B cell (primary cell): ENCODE measurements at regions of chr13 and their contacts with region 1.

Region 1: DNA sequence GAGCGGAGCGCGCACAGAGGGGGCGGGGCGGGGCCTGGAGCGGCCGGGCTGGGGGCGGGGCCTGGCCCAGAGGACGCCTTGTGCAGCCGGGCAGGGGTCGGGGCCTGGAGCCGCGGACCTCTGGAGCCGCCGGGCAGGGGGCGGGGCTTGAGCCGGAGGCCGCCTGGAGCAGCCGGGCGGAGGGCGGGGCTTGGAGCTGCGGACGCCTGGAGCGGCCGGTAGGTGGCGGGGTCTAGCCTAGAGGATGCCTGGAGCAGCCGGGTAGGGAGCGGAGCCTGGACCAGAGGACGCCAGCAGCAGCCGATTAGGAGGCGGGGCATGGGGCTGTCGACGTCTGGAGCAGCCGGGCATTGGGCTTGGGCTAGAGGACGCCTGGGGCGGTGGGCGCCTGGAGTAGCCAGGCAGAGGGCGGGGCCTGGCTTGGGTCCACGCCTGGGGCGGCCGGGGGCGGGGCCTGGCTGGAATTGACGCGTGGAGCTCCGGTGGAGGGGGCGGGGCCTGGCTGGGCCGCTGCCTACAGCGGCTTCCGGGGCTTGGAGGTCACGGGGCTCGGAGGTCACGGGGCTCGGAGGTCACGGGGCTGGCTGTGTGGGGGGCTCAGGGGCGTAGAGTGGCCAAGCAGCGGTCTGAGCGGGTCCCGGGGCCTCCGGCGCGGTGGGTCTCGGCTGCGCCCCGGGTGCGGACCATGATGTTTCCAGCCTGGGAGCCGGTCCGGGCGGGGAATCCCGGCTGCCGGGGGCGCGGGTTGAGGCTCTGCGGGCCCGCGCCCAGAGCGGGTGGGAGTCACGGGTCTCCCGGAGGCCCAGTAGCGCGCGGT is at the start of gene ANKRD10:
- DNase-seq: peak; percentile 98
- ATAC-seq: peak; percentile 81
- H3K4me3 ChIP-seq: peak within 1 kb of the TSS; percentile 74 to 96 (median 95)
- H3K4me3 Mint-ChIP-seq: peak within 1 kb of the TSS; percentile 84
- H3K27ac ChIP-seq: peak within 1 kb of the TSS; percentile 88 to 97
- H3K27ac Mint-ChIP-seq: peak within 1 kb of the TSS; percentile 98
- H3K4me1 ChIP-seq: peaks cover 28 to 38% of the 10 kb centered on the region in 2 donors
- H3K4me1 Mint-ChIP-seq: peaks cover 44% of the 10 kb centered on the region
- H3K27me3 ChIP-seq: no peaks in the 10 kb centered on the region
- H3K27me3 Mint-ChIP-seq: no peaks in the 10 kb centered on the region
- CTCF ChIP-seq: peak; percentile 77
- total RNA-seq, gene ANKRD10: 256 and 288 TPM in 2 replicates

Region 2: GRCh38 chr13:109786457-109787134 is 1128.7 kb before region 1 on chr13 and contains the start of gene IRS2:
- CTCF ChIA-PET with region 1: no interaction called
- POLR2A ChIA-PET with region 1: no interaction called
- intact Hi-C with region 1: loop called (anchors 2 kb)
- DNase-seq: peak; percentile 97
- ATAC-seq: peak; percentile 83
- H3K4me3 ChIP-seq: peak within 1 kb of the TSS; percentile 52 to 72 (median 70)
- H3K4me3 Mint-ChIP-seq: peak within 1 kb of the TSS; percentile 88
- H3K27ac ChIP-seq: peak within 1 kb of the TSS; percentile 44 to 72
- H3K27ac Mint-ChIP-seq: peak within 1 kb of the TSS; percentile 93
- H3K4me1 ChIP-seq: peaks cover 3 to 13% of the 10 kb centered on the region in 2 donors
- H3K4me1 Mint-ChIP-seq: peaks cover 8% of the 10 kb centered on the region
- H3K27me3 ChIP-seq: peaks cover 0 to 11% (median 0%) of the 10 kb centered on the region in 4 experiments
- H3K27me3 Mint-ChIP-seq: peaks cover 11% of the 10 kb centered on the region
- CTCF ChIP-seq: no peak
- total RNA-seq, gene IRS2: 26.9 and 27.7 TPM in 2 replicates

Region 3: DNA sequence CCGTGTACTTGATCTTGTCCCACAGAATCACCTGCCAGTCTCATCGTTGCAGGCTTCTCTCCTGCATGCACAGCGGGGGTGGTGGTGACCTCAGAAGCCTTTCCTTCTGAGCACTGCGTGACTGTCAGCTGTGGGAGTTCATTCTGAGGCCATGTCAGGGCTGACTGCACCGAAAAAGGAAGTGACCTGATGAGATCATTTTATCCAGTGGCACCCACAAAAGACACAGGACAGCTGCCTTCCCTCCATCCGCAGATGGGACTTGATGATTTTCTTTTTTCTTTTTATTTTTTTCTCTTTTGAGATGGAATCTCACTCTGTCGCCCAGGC is 443.5 kb before region 1 on chr13:
- CTCF ChIA-PET with region 1: no interaction called
- POLR2A ChIA-PET with region 1: no interaction called
- intact Hi-C with region 1: loop called (anchors 5 kb)
- DNase-seq: peak; percentile 89
- ATAC-seq: peak; percentile 94
- H3K4me3 ChIP-seq: peak overlapping the region in 2 of 5 experiments; percentile 17 to 19
- H3K4me3 Mint-ChIP-seq: peak overlapping the region; percentile 85
- H3K27ac ChIP-seq: peak overlapping the region; percentile 80 to 83
- H3K27ac Mint-ChIP-seq: peak overlapping the region; percentile 89
- H3K4me1 ChIP-seq: peaks cover 38 to 50% of the 10 kb centered on the region in 2 donors
- H3K4me1 Mint-ChIP-seq: peaks cover 49% of the 10 kb centered on the region
- H3K27me3 ChIP-seq: peaks cover 0 to 2% (median 0%) of the 10 kb centered on the region in 4 experiments
- H3K27me3 Mint-ChIP-seq: no peaks in the 10 kb centered on the region
- CTCF ChIP-seq: no peak

Region 4: GRCh38 chr13:110680851-110681250 is 234.4 kb before region 1 on chr13:
- CTCF ChIA-PET with region 1: interaction called, 3 read pairs
- POLR2A ChIA-PET with region 1: interaction called, 10 read pairs
- intact Hi-C with region 1: loop called (anchors 1 kb)
- DNase-seq: peak; percentile 39
- ATAC-seq: no peak
- H3K4me3 ChIP-seq: no peak overlapping the region
- H3K4me3 Mint-ChIP-seq: no peak overlapping the region
- H3K27ac ChIP-seq: peak overlapping the region in 1 of 2 donors; percentile 6
- H3K27ac Mint-ChIP-seq: peak overlapping the region; percentile 42
- H3K4me1 ChIP-seq: peaks cover 19 to 35% of the 10 kb centered on the region in 2 donors
- H3K4me1 Mint-ChIP-seq: peaks cover 37% of the 10 kb centered on the region
- H3K27me3 ChIP-seq: no peaks in the 10 kb centered on the region
- H3K27me3 Mint-ChIP-seq: no peaks in the 10 kb centered on the region
- CTCF ChIP-seq: peak; percentile 56

Region 5: DNA sequence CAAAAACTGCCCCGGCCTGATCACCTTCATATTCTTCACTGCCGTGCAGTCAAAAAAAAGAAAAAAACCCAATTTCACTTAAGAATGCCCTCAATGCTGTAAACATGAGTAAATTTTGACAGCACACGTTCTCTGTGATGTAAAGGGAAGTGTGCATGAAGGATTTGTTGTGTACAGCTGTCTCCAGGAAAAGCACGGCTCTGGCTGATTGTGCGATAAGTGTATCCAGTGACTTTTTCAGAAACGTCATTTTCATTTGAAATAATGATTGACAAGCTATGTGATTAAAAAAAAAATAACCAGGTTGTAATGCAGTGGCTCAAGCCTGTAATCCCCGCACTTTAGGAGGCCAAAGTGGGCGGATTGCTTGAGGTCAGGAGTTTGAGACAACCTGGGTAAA is 40.0 kb before region 1 on chr13:
- CTCF ChIA-PET with region 1: no interaction called
- POLR2A ChIA-PET with region 1: no interaction called
- intact Hi-C with region 1: loop called (anchors 5 kb)
- DNase-seq: peak; percentile 46
- ATAC-seq: peak; percentile 53
- H3K4me3 ChIP-seq: no peak overlapping the region
- H3K4me3 Mint-ChIP-seq: peak overlapping the region; percentile 75
- H3K27ac ChIP-seq: no peak overlapping the region
- H3K27ac Mint-ChIP-seq: no peak overlapping the region
- H3K4me1 ChIP-seq: peaks cover 18 to 20% of the 10 kb centered on the region in 2 donors
- H3K4me1 Mint-ChIP-seq: peaks cover 11% of the 10 kb centered on the region
- H3K27me3 ChIP-seq: peaks cover 0 to 20% (median 6%) of the 10 kb centered on the region in 4 experiments
- H3K27me3 Mint-ChIP-seq: peaks cover 15% of the 10 kb centered on the region
- CTCF ChIP-seq: no peak

Region 6: DNA sequence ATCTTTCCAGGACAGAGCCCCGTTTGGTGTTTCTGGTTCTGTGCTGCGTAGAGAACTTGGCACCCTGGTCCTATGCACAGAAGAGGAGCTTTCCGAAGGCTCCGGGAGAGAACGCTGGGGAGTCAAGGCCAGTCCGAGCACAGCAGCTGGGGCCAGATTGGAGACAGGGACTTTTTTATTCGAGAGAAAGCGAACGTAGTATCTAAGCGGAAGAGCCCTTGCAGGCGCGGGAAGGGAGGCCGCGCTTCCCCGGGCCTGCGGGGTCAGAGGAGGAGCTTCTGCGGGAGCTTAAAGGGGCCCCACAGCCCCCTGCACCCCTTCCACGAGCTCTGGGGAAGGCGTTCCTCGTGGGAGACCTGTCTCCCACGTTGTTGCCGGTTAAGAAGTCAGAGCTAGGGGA is 151.3 kb after region 1 on chr13:
- CTCF ChIA-PET with region 1: interaction called, 23 read pairs
- POLR2A ChIA-PET with region 1: no interaction called
- intact Hi-C with region 1: no loop called
- DNase-seq: no peak
- ATAC-seq: no peak
- H3K4me3 ChIP-seq: peak overlapping the region in 1 of 5 experiments; percentile 24
- H3K4me3 Mint-ChIP-seq: peak overlapping the region; percentile 78
- H3K27ac ChIP-seq: no peak overlapping the region
- H3K27ac Mint-ChIP-seq: no peak overlapping the region
- H3K4me1 ChIP-seq: peaks cover 8 to 11% of the 10 kb centered on the region in 2 donors
- H3K4me1 Mint-ChIP-seq: peaks cover 9% of the 10 kb centered on the region
- H3K27me3 ChIP-seq: peaks cover 0 to 24% (median 7%) of the 10 kb centered on the region in 4 experiments
- H3K27me3 Mint-ChIP-seq: peaks cover 42% of the 10 kb centered on the region
- CTCF ChIP-seq: no peak

Region 7: DNA sequence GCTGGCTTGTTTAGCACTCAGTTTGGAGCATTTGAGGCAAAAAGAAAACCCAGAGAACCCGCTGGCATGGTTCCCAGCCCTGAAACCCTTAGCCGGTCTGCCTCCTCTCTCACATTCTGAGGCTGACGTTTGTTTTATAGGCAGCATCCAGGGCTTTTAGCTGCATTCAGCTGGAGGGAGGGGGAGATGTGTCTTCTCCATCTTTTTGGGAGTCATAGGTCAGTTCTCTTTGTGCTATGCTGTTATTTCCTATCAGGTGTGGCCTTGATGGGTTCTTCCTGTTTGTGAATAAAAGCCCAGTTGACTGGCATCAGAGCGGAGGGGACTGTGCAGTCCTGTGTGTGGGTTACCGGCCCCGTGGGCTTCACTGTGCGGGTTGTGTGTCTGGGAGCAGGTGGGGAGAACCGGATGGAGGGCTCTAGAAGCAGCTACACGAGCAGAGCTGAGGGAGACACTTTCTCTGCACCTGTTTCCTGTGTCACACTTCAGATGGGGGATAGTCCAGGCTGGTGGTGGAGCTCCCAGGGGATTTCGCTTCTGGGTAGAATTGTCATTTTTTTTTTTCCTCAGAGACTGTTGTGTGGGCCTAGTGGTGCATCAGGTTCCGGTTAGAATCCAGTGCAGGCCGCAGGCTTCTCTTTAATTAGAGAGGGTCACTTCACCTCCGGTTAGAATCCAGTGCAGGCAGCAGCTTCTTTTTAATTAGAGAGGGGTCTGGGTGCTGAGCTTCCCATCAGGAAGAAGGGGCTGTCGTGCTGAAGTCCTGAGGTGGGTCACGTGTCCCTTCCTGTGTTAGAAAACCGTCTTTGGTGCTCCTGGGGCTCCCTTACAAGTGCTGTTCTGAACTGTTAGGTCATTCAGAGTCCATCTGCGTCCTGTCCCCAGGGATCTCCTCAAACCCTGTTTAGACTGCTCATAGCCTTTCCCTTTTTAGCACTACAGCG is 269.5 kb after region 1 on chr13:
- CTCF ChIA-PET with region 1: interaction called, 5 read pairs
- POLR2A ChIA-PET with region 1: interaction called, 5 read pairs
- intact Hi-C with region 1: loop called (anchors 1 kb)
- DNase-seq: peak; percentile 96
- ATAC-seq: peak; percentile 91
- H3K4me3 ChIP-seq: peak overlapping the region; percentile 21 to 60 (median 50)
- H3K4me3 Mint-ChIP-seq: peak overlapping the region; percentile 86
- H3K27ac ChIP-seq: peak overlapping the region; percentile 92 to 95
- H3K27ac Mint-ChIP-seq: peak overlapping the region; percentile 97
- H3K4me1 ChIP-seq: peaks cover 75 to 96% of the 10 kb centered on the region in 2 donors
- H3K4me1 Mint-ChIP-seq: peaks cover 97% of the 10 kb centered on the region
- H3K27me3 ChIP-seq: no peaks in the 10 kb centered on the region
- H3K27me3 Mint-ChIP-seq: no peaks in the 10 kb centered on the region
- CTCF ChIP-seq: no peak